ENCODE measurements at regions of chr12 and their contacts with region 1.

Region 1: DNA sequence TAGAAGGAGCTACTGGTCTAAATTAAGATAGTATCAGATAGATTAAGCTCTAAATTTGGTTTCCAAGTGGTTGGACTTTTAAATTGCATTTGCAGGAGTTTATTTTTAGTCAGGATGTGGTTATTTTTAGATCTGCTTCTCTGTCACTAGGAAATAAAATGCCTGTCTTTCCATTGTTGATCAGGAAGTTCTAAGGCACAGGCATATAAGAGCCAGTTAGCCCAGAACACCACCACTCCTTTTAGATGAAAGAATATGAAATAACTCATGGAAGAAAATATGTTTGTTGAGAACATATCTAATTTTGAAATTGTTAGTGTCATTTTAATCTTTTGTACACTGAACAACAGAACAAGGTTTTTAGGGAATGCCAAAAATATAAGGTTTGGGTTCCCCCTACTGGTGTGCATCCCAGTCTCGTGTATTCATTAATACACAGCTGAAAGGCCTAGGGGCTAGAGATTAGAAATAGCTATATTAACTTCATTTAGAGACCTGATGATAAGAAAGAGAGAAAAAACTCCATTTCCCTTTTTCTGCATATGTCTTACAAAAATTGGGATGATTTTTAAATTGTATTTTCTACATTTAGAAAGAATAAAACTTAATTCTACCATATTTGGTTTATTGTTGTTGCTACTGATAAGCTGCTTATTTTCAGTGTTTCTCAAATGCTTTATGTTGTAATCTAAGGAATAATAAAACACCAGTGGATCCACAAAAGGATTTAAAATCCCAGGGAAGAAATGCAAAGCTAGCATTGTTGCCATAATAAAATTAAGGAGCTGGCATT is 67.2 kb downstream of the RIC8B start:
- DNase-seq: peak in 6 of 9 donors; percentile 24 to 49 (median 44)
- ATAC-seq: peak; percentile 45
- H3K4me3 ChIP-seq: no peak overlapping the region
- H3K4me3 Mint-ChIP-seq: no peak overlapping the region
- H3K27ac ChIP-seq: no peak overlapping the region
- H3K27ac Mint-ChIP-seq: peak overlapping the region in 2 of 9 donors; percentile 20 to 26
- H3K4me1 ChIP-seq: no peaks in the 10 kb centered on the region
- H3K4me1 Mint-ChIP-seq: peaks cover 14 to 32% (median 20%) of the 10 kb centered on the region in 7 donors
- H3K27me3 ChIP-seq: no peaks in the 10 kb centered on the region
- H3K27me3 Mint-ChIP-seq: no peaks in the 10 kb centered on the region

Region 2: DNA sequence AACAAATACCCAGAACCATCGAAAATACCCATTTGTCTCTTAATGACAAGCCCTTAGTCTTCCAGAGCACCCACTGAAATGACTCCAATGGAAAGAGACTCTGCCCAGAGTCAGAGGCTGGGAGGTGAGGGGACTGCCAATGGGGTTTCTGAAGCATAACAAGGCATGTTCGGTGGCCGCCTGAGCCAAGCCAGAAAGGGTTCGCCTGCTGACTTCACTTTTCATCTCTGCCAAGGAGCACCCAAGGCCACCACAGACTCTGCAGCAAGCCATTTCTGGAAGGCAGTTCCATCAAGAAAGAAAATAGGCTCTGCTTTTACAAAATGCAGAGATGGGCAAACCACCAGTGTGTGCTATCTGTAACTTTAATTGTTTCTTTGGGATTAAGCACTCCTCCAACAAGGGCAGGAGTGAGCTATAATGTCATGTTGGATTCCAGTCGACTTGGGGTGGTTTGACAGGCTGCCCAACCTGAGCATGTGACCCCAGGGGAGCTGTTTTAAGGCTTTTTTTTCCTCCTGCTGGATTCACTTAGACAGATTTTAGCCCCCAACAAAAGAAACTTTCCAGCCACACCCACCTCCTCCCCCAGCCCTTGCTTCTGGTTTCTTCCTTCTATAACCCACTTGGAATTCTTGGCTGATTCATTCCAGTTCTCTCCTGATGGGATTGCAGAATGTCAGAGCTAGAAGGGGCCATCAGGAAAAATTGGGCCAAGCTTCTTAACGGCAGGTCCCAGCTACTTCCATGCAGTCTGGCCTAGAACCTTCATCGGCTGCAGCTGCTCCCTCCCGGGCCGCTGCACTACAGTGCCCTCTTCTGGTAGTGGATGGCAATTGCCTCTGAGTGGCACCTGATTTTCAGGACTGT is 618.0 kb before region 1 on chr12:
- CTCF ChIA-PET with region 1: interaction called, 4 read pairs
- POLR2A ChIA-PET with region 1: no interaction called
- intact Hi-C with region 1: loop called in 1 of 2 experiments (anchors 5 kb)
- DNase-seq: peak; percentile 41 to 80 (median 66)
- ATAC-seq: peak; percentile 78
- H3K4me3 ChIP-seq: no peak overlapping the region
- H3K4me3 Mint-ChIP-seq: peak overlapping the region in 3 of 10 donors; percentile 14 to 67 (median 33)
- H3K27ac ChIP-seq: no peak overlapping the region
- H3K27ac Mint-ChIP-seq: peak overlapping the region in 1 of 9 donors; percentile 49
- H3K4me1 ChIP-seq: peaks cover 0 to 13% of the 10 kb centered on the region in 2 donors
- H3K4me1 Mint-ChIP-seq: peaks cover 12 to 22% (median 19%) of the 10 kb centered on the region in 7 donors
- H3K27me3 ChIP-seq: no peaks in the 10 kb centered on the region
- H3K27me3 Mint-ChIP-seq: peaks cover 4 to 20% (median 10%) of the 10 kb centered on the region in 5 donors

Region 3: DNA sequence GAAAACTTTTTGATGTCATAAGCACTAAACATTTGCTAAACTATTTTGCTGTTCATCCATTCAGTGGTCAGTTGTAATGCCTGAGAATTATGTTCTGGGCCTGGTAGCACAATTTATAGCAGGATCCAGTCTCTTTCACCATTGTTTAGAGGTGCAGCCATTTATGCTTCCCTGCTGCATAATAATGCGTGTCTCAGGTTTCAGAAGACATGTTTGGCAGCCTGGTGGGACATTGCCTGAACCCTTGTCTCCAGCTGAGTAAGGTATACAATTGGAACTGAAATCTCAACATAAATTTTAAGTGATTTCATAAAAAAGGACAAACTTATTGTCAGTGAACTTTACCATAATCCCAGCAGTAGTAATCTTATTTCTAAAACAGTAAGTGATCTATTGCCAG is 389.4 kb before region 1 on chr12:
- CTCF ChIA-PET with region 1: no interaction called
- POLR2A ChIA-PET with region 1: no interaction called
- intact Hi-C with region 1: loop called in 1 of 2 experiments (anchors 5 kb)
- DNase-seq: no peak
- ATAC-seq: no peak
- H3K4me3 ChIP-seq: no peak overlapping the region
- H3K4me3 Mint-ChIP-seq: no peak overlapping the region
- H3K27ac ChIP-seq: no peak overlapping the region
- H3K27ac Mint-ChIP-seq: no peak overlapping the region
- H3K4me1 ChIP-seq: no peaks in the 10 kb centered on the region
- H3K4me1 Mint-ChIP-seq: peaks cover 0 to 3% (median 0%) of the 10 kb centered on the region in 7 donors
- H3K27me3 ChIP-seq: no peaks in the 10 kb centered on the region
- H3K27me3 Mint-ChIP-seq: no peaks in the 10 kb centered on the region

Region 4: GRCh38 chr12:106594447-106594846 is 247.3 kb before region 1 on chr12:
- CTCF ChIA-PET with region 1: no interaction called
- POLR2A ChIA-PET with region 1: no interaction called
- intact Hi-C with region 1: loop called in 1 of 2 experiments (anchors 10 kb)
- DNase-seq: no peak
- ATAC-seq: no peak
- H3K4me3 ChIP-seq: no peak overlapping the region
- H3K4me3 Mint-ChIP-seq: peak overlapping the region in 2 of 10 donors; percentile 17 to 40
- H3K27ac ChIP-seq: no peak overlapping the region
- H3K27ac Mint-ChIP-seq: no peak overlapping the region
- H3K4me1 ChIP-seq: no peaks in the 10 kb centered on the region
- H3K4me1 Mint-ChIP-seq: peaks cover 0 to 11% (median 4%) of the 10 kb centered on the region in 7 donors
- H3K27me3 ChIP-seq: peaks cover 0 to 3% of the 10 kb centered on the region in 2 donors
- H3K27me3 Mint-ChIP-seq: peaks cover 48 to 68% (median 58%) of the 10 kb centered on the region in 5 donors

Region 5: GRCh38 chr12:106722854-106723253 is 118.9 kb before region 1 on chr12:
- CTCF ChIA-PET with region 1: interaction called, 3 read pairs
- POLR2A ChIA-PET with region 1: no interaction called
- intact Hi-C with region 1: loop called in 1 of 2 experiments (anchors 1 kb)
- DNase-seq: no peak
- ATAC-seq: no peak
- H3K4me3 ChIP-seq: no peak overlapping the region
- H3K4me3 Mint-ChIP-seq: no peak overlapping the region
- H3K27ac ChIP-seq: no peak overlapping the region
- H3K27ac Mint-ChIP-seq: no peak overlapping the region
- H3K4me1 ChIP-seq: no peaks in the 10 kb centered on the region
- H3K4me1 Mint-ChIP-seq: peaks cover 0 to 3% (median 0%) of the 10 kb centered on the region in 7 donors
- H3K27me3 ChIP-seq: no peaks in the 10 kb centered on the region
- H3K27me3 Mint-ChIP-seq: peaks cover 0 to 10% (median 5%) of the 10 kb centered on the region in 5 donors

Region 6: DNA sequence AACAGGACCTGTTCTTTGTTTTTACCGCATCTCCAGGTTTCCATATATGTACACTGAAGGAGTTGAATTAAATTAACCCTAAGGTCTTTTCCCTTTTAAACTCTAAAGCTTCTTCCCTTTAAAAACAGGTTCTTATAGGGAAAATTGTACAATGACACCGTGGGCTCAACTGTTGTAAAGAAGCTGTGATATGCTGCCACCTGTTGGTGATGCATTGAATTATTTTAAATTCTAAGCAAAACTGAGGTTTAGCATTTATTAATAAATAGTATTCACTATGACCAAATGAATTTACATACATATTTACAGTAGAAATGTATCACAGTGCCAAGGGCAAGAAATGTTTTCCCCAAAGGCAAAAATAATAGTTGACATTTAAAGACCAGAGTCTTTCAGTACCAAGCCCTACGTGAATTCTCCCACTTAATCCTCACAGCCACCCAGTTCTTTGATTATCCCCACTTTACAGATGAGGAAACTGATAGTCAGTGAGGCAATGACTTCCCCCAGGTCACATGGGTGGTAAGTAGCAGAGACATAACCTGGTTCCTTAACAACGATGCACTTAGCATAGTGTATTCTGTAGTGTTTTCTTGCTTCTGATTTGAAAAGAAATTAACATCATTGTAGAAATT is 78.3 kb after region 1 on chr12:
- CTCF ChIA-PET with region 1: interaction called, 10 read pairs
- POLR2A ChIA-PET with region 1: no interaction called
- intact Hi-C with region 1: loop called (anchors 1 to 5 kb)
- DNase-seq: peak in 7 of 9 donors; percentile 12 to 53 (median 32)
- ATAC-seq: peak; percentile 60
- H3K4me3 ChIP-seq: no peak overlapping the region
- H3K4me3 Mint-ChIP-seq: no peak overlapping the region
- H3K27ac ChIP-seq: no peak overlapping the region
- H3K27ac Mint-ChIP-seq: no peak overlapping the region
- H3K4me1 ChIP-seq: peaks cover 0 to under 1% of the 10 kb centered on the region in 2 donors
- H3K4me1 Mint-ChIP-seq: peaks cover 8 to 15% (median 9%) of the 10 kb centered on the region in 7 donors
- H3K27me3 ChIP-seq: no peaks in the 10 kb centered on the region
- H3K27me3 Mint-ChIP-seq: peaks cover 5 to 50% (median 14%) of the 10 kb centered on the region in 5 donors

Measured in naive thymus-derived CD4-positive, alpha-beta T cell (primary cell).